Caco-2 (cell line): ENCODE measurements at regions of chr12 and their contacts with region 1.

Region 1: DNA sequence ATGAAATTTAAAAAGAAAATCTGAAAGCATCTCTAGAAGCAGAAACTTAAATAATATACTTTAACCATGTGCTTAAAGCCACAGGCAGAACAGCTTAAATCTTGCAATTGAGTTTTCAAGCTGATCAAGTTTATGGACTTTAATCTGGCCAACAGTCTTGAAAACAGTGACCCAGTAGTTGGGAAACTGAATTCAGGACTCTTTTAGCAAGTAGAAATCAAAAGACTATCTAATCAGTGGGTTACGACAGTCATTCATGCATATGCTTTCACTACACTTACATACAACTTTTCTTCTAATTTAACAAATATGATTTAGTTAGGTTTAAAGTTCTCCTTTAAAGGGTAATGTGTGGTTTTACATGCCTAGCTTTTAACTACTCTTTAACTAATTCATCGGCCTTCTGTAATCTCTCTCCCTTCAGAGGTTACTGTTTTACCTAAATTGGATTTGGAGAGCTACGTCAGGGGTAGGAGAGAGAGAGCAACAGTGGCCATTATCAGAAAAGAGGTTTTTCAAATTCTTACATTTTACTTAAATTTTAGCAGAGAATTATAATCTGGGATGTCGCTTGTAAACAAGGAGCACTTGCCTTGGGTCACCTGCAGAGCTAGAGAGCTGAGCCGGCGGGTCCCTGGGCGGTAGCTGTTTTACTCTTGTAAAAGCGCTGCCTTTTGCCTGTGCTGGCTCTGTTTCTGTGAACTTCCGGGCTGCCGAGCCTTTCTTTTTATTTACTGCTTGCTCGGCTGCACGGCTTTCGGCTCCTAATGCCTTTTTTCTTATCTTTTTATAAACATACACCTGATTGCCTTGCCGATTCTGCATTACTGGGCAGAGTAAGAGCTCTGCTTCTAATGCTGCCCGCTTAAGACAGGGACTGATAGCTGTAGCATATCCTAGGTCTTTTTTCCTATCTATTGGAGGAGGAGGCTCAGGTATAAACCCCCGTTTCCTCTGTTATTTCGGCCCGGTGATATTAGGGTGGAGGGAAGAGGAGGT is 17.4 kb upstream of the LYZ start:
- DNase-seq: peak; percentile 49 to 56
- H3K4me3 ChIP-seq: peak overlapping the region; percentile 60
- H3K4me3 Mint-ChIP-seq: peak overlapping the region; percentile 97
- H3K27ac Mint-ChIP-seq: peak overlapping the region; percentile 79
- H3K4me1 ChIP-seq: peaks cover 36% of the 10 kb centered on the region
- H3K4me1 Mint-ChIP-seq: peaks cover 40% of the 10 kb centered on the region
- H3K27me3 ChIP-seq: no peaks in the 10 kb centered on the region
- H3K27me3 Mint-ChIP-seq: no peaks in the 10 kb centered on the region
- CTCF ChIP-seq: no peak

Region 2: GRCh38 chr12:69366796-69367195 is 36.0 kb after region 1 on chr12:
- CTCF ChIA-PET with region 1: no interaction called
- POLR2A ChIA-PET with region 1: interaction called, 3 read pairs
- intact Hi-C with region 1: loop called (anchors 1 kb)
- DNase-seq: no peak
- H3K4me3 ChIP-seq: no peak overlapping the region
- H3K4me3 Mint-ChIP-seq: no peak overlapping the region
- H3K27ac Mint-ChIP-seq: peak overlapping the region; percentile 57
- H3K4me1 ChIP-seq: peaks cover 48% of the 10 kb centered on the region
- H3K4me1 Mint-ChIP-seq: peaks cover 31% of the 10 kb centered on the region
- H3K27me3 ChIP-seq: no peaks in the 10 kb centered on the region
- H3K27me3 Mint-ChIP-seq: no peaks in the 10 kb centered on the region
- CTCF ChIP-seq: no peak

Region 3: DNA sequence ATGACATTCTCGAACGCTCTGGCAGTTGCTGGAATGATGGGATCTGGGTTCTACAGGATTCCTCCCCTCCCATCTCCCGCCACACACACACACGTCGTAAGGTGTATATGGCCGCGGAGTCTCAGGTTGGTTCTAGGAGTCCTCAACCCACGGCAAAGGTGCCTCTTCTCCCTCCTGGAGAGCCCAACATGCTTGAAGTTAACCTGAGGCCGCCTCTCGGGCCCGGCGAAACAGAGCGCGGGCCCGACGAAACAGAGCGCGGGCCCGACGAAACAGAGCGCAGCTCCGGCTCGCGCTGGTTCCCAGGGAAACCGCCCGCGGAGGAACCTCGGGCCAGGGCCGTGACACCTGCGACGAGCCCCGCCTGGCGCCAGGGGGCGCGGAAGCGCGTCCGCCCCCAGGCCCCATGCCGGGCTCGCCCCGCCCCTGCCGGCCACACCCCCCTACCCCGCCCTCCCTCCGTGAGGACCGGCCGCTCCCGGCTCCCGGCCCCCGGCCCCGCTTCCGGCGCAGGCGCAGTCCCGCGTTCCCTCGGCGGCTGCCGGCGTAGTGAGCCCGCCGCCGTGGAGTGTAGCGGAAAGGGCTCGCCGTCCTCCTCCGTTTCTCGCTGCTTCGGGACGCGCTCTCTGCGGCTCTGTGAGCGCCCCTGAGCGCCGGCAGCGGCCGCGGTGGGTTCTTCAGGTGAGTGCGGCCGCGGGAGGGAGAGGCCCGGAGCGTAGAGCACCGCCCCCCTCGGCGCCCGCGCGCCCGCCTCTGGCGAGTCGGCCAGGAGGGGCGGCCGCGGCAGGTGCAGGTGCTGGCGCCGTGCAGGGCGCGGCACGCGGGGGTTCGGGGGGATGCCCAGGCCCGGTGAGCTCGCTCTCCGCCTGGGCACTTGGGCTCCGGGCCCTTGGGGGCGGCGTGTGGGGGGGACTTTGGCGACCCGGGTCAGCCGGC is 407.8 kb after region 1 on chr12 and contains the start of gene RAB3IP:
- CTCF ChIA-PET with region 1: no interaction called
- POLR2A ChIA-PET with region 1: no interaction called
- intact Hi-C with region 1: loop called (anchors 10 kb)
- DNase-seq: peak; percentile 92 to 95
- H3K4me3 ChIP-seq: peak within 1 kb of the TSS; percentile 90
- H3K4me3 Mint-ChIP-seq: peak within 1 kb of the TSS; percentile 94
- H3K27ac Mint-ChIP-seq: peak within 1 kb of the TSS; percentile 97
- H3K4me1 ChIP-seq: peaks cover 15% of the 10 kb centered on the region; the same call in 1 of the 2 replicates
- H3K4me1 Mint-ChIP-seq: peaks cover 10% of the 10 kb centered on the region
- H3K27me3 ChIP-seq: no peaks in the 10 kb centered on the region
- H3K27me3 Mint-ChIP-seq: no peaks in the 10 kb centered on the region
- CTCF ChIP-seq: peak; percentile 69 to 74
- total RNA-seq, gene RAB3IP: 70.8 and 82.5 TPM in 2 replicates